ENCODE measurements at regions of chr5 and their contacts with region 1.

Region 1: GRCh38 chr5:76468635-76469425 is 65.7 kb downstream of the IQGAP2 start:
- DNase-seq: no peak
- ATAC-seq: no peak
- H3K4me3 ChIP-seq: no peak overlapping the region
- H3K27ac ChIP-seq: no peak overlapping the region
- H3K4me1 ChIP-seq: peaks cover 0 to 37% (median 13%) of the 10 kb centered on the region in 4 donors
- H3K27me3 ChIP-seq: no peaks in the 10 kb centered on the region
- CTCF ChIP-seq: no peak
- POLR2A ChIP-seq: no peak

Region 2: GRCh38 chr5:76413746-76414145 is 55.1 kb before region 1 on chr5:
- intact Hi-C with region 1: loop called in 1 of 2 experiments (anchors 10 kb)
- DNase-seq: no peak
- ATAC-seq: no peak
- H3K4me3 ChIP-seq: no peak overlapping the region
- H3K27ac ChIP-seq: no peak overlapping the region
- H3K4me1 ChIP-seq: peaks cover 0 to 40% (median 8%) of the 10 kb centered on the region in 4 donors
- H3K27me3 ChIP-seq: no peaks in the 10 kb centered on the region
- CTCF ChIP-seq: no peak
- POLR2A ChIP-seq: no peak